Body of pancreas (tissue), 4 donors: ENCODE measurements at regions of chr12 and their contacts with region 1.

Region 1: GRCh38 chr12:107131832-107132616 is 38.7 kb upstream of the CRY1 start:
- DNase-seq: peak; percentile 11 to 44 (median 12)
- ATAC-seq: peak; percentile 45
- H3K4me3 ChIP-seq: no peak overlapping the region
- H3K27ac ChIP-seq: no peak overlapping the region
- H3K4me1 ChIP-seq: no peaks in the 10 kb centered on the region
- H3K27me3 ChIP-seq: no peaks in the 10 kb centered on the region
- CTCF ChIP-seq: peak; percentile 46 to 90 (median 80)
- POLR2A ChIP-seq: no peak

Region 2: GRCh38 chr12:107287436-107288413 is 155.7 kb after region 1 on chr12:
- intact Hi-C with region 1: no loop called
- DNase-seq: no peak
- ATAC-seq: no peak
- H3K4me3 ChIP-seq: no peak overlapping the region
- H3K27ac ChIP-seq: no peak overlapping the region
- H3K4me1 ChIP-seq: no peaks in the 10 kb centered on the region
- H3K27me3 ChIP-seq: no peaks in the 10 kb centered on the region
- CTCF ChIP-seq: no peak
- POLR2A ChIP-seq: no peak

Region 3: DNA sequence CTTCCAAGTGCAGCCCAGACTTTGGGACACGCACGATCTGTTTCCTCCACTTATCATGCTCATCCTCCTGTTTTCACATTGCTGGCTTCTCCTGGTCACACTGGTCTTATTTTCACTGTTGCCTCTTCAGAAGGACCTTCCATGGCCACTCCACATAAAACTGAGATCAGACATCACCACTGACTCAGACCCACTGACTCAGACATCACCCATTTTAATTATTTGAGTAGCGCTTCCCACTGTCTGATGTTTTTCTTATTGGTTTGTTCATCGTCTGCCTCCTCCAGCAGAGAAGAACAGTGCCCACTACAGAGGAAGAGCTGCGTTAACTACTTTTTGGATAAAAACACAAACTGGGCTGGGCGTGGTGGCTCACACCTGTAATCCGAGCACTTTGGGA is 283.0 kb after region 1 on chr12:
- intact Hi-C with region 1: no loop called
- DNase-seq: no peak
- ATAC-seq: no peak
- H3K4me3 ChIP-seq: no peak overlapping the region
- H3K27ac ChIP-seq: no peak overlapping the region
- H3K4me1 ChIP-seq: no peaks in the 10 kb centered on the region
- H3K27me3 ChIP-seq: no peaks in the 10 kb centered on the region
- CTCF ChIP-seq: no peak
- POLR2A ChIP-seq: no peak

Region 4: DNA sequence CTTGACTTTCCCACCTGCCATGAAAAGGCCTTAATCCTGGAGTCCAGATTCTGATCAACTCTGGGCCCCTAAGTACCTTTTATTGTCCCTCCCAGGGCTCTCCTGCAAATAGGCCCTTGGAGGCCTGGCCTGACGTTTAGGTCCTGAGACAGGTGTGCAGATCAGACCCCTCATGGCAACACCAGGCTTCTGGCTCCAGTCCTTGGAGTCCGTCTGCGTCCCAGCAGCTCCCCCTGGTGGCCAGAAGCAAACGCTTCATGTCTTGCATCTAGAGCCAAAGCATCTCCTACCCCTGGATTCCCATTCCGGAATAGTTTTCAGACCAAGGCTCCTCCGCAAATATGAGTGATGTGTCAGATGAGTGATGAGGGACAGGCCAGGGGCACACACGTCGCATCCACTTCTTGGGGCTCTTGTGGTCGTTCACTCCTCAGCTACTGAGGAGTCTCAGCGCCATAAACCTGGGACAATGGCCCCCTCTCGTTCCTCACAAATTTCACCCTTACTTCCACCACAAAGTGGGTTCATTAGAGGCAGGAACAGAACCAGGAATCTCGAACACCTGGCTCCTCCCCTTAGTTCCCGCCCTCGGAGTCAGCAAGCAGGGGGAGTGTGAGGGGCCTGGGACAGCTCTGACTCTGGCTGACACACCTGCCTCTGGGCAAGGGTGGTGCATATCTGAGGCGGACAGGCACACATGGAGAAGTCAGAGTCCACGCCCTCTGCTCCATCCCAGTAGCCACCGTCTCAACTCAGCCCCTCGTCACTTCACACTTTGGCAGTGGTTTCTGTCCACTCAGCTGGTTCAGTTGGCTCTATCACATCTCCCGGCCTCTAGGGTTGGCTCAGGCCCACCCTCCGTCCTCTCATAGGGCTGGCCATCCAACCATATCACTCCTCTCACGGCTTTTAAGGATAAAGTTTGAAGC is 475.7 kb after region 1 on chr12:
- intact Hi-C with region 1: loop called (anchors 5 kb)
- DNase-seq: peak; percentile 80 to 85 (median 82)
- ATAC-seq: peak; percentile 62
- H3K4me3 ChIP-seq: no peak overlapping the region
- H3K27ac ChIP-seq: no peak overlapping the region
- H3K4me1 ChIP-seq: no peaks in the 10 kb centered on the region
- H3K27me3 ChIP-seq: no peaks in the 10 kb centered on the region
- CTCF ChIP-seq: peak; percentile 65 to 89 (median 83)
- POLR2A ChIP-seq: no peak